ENCODE measurements at regions of chr11 and their contacts with region 1.

Region 1: DNA sequence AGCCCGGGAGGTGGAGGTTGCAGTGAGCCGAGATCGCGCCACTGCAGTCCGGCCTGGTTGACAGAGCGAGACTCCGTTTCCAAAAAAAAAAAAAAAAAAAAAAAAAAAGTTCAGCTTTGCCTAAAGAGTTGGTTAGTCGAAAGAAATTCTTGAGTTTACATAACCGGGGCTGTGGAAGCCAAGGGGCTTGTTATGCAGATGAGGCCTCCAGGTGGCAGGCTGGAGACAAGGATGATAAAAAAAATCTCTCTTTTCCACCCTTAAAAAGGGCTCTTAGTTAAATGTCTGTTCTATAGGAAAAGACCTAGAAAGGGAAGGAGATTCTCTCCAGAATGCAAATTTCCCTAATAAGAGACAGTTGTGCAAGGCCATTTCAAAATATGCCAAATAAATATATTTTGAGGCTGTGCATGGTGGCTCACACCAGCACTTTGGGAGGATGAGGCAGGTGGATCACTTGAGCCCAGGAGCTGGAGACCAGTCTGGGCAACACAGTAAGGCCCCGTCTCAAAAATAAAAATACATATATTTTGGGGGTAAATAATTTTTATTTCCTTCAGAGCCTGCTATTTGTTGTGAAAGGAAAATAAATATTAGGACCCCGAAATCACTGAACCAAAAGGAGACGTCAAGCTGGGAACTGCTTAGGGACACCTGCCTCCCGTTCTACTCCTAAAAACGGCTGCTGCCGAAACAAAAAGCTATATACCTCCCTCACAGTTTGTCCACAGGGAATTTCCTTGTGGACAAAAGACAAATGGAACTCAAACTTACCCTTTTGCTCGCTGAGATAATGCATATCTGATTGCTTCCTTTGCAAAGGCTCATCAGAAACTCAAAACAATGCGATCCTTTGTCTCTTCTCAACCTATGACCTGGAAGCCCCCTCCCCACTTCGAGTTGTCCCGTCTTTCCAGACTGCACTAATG is 2.4 kb upstream of the IFITM2 start:
- DNase-seq: peak; percentile 80
- H3K4me3 ChIP-seq: no peak overlapping the region
- H3K27ac ChIP-seq: no peak overlapping the region
- H3K4me1 ChIP-seq: peaks cover 31% of the 10 kb centered on the region
- CTCF ChIP-seq: peak; percentile 85

Region 2: DNA sequence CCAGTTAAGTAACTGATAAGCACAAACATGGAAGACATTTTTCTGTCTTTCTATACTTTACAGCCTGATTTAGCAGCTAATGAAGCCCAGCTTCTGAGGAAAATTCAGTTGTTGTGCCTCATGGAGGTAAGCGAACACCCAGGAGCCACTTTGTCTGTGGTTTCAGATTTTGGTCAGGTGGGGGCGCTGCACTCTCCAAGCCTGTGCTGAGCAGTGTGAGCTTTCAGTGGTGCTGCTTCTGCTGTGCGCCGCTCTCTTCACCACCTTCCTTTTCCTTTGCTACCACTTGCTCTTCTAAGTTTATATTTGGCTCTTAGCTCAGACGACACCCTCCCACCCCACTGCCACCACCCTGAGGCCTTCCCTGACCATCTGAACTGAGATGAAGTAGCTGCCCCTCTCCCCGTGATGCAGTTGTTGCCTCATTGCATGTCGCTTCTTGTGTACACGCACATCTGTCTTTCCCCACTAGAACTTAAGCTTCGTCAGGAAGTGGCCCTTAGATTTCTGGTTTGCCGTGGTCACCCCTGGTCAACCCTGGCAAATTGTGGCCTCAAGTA is 54.4 kb before region 1 on chr11:
- CTCF ChIA-PET with region 1: no interaction called
- POLR2A ChIA-PET with region 1: no interaction called
- intact Hi-C with region 1: loop called (anchors 10 kb)
- DNase-seq: peak; percentile 60
- H3K4me3 ChIP-seq: no peak overlapping the region
- H3K27ac ChIP-seq: no peak overlapping the region
- H3K4me1 ChIP-seq: no peaks in the 10 kb centered on the region
- CTCF ChIP-seq: peak; percentile 91

Region 3: DNA sequence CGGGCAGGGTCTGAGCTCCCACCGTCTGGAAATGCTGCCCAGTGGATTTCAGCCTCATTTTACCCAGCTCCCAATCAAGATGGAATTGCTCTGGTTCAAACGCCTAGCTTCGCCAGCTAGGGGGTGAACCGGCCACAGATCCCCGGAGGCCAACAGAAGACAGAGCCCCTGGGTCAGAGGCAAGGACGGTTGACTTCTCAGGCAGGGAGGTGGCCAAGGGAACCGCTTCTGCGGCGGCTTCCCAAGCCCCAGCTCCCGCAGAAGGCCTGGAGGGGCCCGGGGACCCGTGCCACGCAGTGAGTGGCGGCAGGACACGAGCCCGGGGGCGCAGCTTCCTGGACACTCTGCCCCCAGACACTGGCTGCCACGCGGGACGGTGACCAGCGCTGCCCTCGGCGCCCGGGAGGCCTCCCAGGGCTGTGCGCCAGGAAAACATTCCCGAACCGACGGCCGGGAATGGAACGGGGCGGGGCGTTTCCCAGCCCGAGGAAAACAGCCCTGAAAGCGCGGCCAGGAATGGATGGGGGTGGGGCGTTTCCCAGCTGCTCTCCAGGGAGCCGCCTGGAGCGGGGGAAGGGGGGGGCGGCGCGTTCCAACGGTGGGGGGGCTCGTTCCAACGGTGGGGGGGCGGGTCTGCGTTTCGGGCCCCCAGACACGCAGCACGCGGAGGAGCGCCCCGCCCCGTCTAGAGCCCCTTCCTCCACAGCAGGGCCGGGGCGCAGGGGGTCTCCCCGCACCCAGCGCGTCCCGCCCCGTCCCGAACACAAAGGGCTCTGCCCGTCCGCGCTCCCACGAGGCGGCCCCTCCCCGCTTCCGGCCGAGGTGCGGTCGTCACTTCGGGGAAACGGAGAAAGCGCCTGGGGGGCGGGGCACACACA is 50.6 kb after region 1 on chr11:
- CTCF ChIA-PET with region 1: interaction called, 11 read pairs
- POLR2A ChIA-PET with region 1: interaction called, 6 read pairs
- intact Hi-C with region 1: loop called (anchors 1 kb)
- DNase-seq: peak; percentile 81
- H3K4me3 ChIP-seq: peak overlapping the region; percentile 55
- H3K27ac ChIP-seq: peak overlapping the region; percentile 73
- H3K4me1 ChIP-seq: peaks cover 41% of the 10 kb centered on the region
- CTCF ChIP-seq: no peak

Region 4: DNA sequence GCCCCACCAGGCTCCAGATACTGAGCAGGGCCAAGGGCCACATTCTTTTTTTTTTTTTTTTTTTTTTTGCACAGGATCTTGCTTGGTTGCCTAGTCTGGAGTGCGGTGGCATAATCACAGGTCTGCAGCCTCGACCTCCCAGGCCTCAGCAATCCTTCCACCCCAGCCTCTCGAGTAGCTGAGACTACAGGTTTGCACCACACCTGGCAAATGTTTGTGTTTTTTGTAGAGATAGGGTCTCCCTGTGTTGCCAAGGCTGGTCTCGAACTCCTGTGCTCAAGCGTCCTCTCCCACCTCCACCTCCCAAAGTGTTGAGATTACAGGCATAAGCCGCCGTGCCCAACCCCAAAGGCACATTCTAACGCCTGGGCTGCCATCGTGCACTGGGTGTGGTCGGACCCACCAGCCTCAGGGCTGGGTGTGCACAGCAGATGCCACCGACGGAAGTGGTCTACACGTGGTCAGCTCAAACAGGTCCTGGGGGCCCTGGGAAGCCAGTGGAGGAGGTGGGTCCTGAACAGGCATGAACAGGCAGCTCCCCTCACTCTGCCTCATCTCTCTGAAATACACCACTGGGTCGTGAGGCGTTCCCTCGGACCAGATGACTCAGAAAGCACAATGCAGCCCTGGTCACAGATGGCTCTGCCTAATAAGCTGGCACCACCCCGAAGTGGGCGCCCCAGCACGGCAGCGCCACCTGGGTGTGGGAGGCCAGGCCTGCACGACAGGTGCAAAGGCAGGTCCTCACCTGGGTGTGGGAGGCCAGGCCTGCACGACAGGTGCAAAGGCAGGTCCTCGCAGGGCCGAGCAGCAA is 59.0 kb after region 1 on chr11:
- CTCF ChIA-PET with region 1: interaction called, 3 read pairs
- POLR2A ChIA-PET with region 1: interaction called, 3 read pairs
- intact Hi-C with region 1: loop called (anchors 1 kb)
- DNase-seq: peak; percentile 74
- H3K4me3 ChIP-seq: no peak overlapping the region
- H3K27ac ChIP-seq: no peak overlapping the region
- H3K4me1 ChIP-seq: no peaks in the 10 kb centered on the region
- CTCF ChIP-seq: peak; percentile 82

Measured in OCI-LY7 (cell line).